A549 (cell line): ENCODE measurements at regions of chr17 and their contacts with region 1.

Region 1: DNA sequence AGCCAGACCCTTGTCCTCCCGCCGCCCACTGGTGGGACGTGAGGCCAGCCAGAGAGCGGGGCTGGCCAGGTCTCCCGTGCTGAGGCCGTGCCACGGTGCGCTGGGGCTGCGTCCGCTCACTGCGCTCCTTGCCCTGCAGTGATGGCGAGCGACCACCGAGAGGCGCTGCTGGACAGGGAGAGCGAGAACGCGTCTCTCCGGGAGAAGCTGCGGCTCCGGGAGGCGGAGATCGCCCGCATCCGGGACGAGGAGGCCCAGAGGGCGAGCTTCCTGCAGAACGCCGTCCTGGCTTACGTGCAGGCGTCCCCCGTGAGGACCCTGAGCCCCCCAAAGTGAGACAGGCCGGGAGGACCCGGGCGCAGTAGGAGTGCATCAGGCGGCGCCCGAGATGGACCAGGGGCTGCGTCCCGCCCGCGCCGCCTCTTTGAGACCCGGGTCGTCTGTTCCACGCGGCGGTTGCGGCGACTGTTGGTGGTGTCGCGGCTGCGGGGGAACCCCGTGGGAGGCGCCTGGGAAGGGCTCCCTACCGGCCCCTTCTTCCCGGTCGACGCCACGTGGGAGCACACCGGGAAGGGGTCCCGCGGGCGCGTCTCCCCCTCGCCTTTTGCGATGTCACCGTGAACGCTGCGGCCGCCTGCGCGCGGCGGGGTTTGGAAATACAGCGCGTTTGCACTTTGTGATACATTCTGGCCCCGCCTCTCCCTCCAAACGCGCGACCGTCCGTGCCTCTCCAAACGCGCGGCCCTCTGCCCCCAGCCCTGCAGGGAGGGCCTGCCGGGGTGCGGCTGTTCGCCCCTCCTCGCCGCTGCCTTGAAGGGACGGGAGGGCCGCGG is 792 bp upstream of the RAC3 start:
- DNase-seq: peak; percentile 92 to 93
- ATAC-seq: peak; percentile 62 to 88
- H3K4me3 ChIP-seq: peak overlapping the region; percentile 66
- H3K27ac ChIP-seq: peak overlapping the region; percentile 75 to 94
- H3K4me1 ChIP-seq: peaks cover 5% of the 10 kb centered on the region; the same call in 1 of the 3 replicates
- CTCF ChIP-seq: peak; percentile 54
- EP300 ChIP-seq: no peak
- POLR2A ChIP-seq: peak; percentile 31; the same call in 1 of the 2 replicates
- RAD21 ChIP-seq: peak; percentile 80 to 91

Region 2: DNA sequence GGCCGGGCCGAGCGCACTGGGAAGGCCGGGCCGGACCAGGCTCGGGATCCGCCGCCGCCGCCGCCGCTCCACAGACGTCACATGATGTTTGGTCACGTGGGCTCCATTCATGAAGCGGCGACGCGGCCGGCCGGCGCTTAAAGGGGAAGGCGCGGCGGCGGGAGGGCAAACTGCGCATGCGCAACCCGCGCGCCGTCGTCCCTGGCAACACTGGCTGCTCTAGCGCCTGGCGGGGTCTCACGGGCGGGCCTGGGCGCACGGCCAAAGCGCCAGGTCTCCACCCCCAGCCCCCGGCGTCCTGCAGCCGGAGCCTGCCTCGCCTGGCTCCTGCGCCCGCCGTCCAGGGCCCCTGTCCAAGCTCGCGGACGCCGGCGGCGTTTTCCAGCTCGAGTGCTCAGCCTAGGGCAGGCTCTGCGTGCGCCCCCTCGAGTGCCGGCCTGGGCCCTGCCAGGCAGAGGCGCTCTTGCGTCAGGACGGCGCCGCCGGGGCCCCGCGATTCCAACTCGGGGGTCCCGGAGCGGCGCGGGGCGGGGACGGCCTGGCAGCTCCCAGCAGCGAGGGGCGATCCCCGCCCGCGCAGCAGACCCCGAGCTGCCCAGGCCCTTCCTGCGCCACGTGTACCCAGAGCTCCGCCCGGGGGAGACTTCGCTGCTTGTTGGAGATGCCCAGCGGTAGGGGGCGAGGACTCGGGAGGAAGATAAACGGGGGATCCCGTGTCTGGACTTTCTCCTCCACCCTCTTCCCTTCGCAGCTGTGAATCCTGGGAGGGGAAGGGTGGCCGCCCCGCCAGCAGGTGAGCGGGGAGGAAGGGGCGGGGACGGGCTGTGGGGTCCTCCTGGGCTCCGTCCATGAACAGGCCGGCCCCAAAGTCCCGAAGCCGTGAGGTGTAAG is 102.8 kb before region 1 on chr17 and contains the start of gene MAFG:
- CTCF ChIA-PET with region 1: interaction called, 13 read pairs
- POLR2A ChIA-PET with region 1: interaction called, 3 read pairs
- DNase-seq: peak; percentile 96 to 98
- ATAC-seq: peak; percentile 20 to 40
- H3K4me3 ChIP-seq: peak within 1 kb of the TSS; percentile 90
- H3K27ac ChIP-seq: peak within 1 kb of the TSS; percentile 96 to 98
- H3K4me1 ChIP-seq: peaks cover 36% of the 10 kb centered on the region
- CTCF ChIP-seq: peak; percentile 74
- EP300 ChIP-seq: no peak
- POLR2A ChIP-seq: peak; percentile 33
- RAD21 ChIP-seq: peak in 1 of 2 experiments; percentile 54; a peak in 3 of 5 replicates
- polyA plus RNA-seq, gene MAFG: 41.6 and 47.9 TPM in 2 replicates

Region 3: DNA sequence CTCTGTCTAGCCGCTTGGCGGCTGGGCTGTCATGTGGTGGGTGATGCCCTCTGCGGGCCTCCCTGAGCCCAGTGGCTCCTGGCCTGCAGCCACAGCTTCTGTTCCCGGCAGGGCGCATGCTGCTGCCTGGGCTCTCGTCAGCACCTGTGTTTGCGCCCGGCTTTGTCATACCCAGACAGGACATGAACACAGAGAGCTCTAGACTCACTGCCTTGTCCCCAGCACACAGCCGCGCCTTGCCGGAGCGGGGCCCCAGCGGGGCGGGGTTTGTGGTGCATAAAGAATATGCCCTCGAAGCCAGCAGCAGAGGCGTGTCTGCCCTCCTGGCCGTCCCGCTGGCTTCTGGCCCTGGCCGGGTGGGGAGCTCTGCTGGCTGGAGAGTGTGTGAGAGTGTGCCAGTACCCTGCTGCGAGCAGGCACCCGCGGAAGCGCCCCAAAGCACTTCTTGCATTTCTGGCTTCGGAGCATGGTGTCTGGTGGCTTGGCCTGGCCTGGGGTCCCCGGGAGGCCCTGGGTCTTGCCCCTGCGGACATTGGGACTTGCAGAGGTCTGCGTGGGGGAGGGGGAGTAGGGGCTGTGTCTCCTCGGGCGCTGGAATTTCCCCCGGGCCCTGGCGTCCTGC is 38.9 kb before region 1 on chr17:
- CTCF ChIA-PET with region 1: interaction called, 15 read pairs
- POLR2A ChIA-PET with region 1: no interaction called
- DNase-seq: peak in 1 of 2 experiments; percentile 50
- ATAC-seq: peak; percentile 38 to 61
- H3K4me3 ChIP-seq: no peak overlapping the region
- H3K27ac ChIP-seq: peak overlapping the region in 1 of 2 experiments; percentile 61; a peak in 4 of 6 replicates
- H3K4me1 ChIP-seq: peaks cover 17% of the 10 kb centered on the region
- CTCF ChIP-seq: no peak
- EP300 ChIP-seq: no peak
- POLR2A ChIP-seq: no peak
- RAD21 ChIP-seq: no peak

Region 4: GRCh38 chr17:82077617-82078358 is 47.1 kb after region 1 on chr17:
- CTCF ChIA-PET with region 1: interaction called, 21 read pairs
- POLR2A ChIA-PET with region 1: no interaction called
- DNase-seq: no peak
- ATAC-seq: peak in 1 of 2 experiments; percentile 2; a peak in 3 of 6 replicates
- H3K4me3 ChIP-seq: no peak overlapping the region
- H3K27ac ChIP-seq: no peak overlapping the region
- H3K4me1 ChIP-seq: no peaks in the 10 kb centered on the region
- CTCF ChIP-seq: no peak
- EP300 ChIP-seq: no peak
- POLR2A ChIP-seq: no peak
- RAD21 ChIP-seq: no peak

Region 5: GRCh38 chr17:82105882-82106687 is 75.4 kb after region 1 on chr17:
- CTCF ChIA-PET with region 1: interaction called, 35 read pairs
- POLR2A ChIA-PET with region 1: no interaction called
- DNase-seq: peak; percentile 82 to 88
- ATAC-seq: peak; percentile 77 to 87
- H3K4me3 ChIP-seq: no peak overlapping the region
- H3K27ac ChIP-seq: peak overlapping the region; percentile 54 to 73
- H3K4me1 ChIP-seq: peaks cover 53% of the 10 kb centered on the region
- CTCF ChIP-seq: no peak
- EP300 ChIP-seq: no peak
- POLR2A ChIP-seq: peak; percentile 60
- RAD21 ChIP-seq: 0 out of 5 replicates have a peak, but pooled peaks of 1 of the 2 experiments have one; percentile 15

Region 6: GRCh38 chr17:82173351-82174041 is 142.8 kb after region 1 on chr17:
- CTCF ChIA-PET with region 1: interaction called, 13 read pairs
- POLR2A ChIA-PET with region 1: no interaction called
- DNase-seq: no peak
- ATAC-seq: peak in 1 of 2 experiments; percentile 28; a peak in 2 of 6 replicates
- H3K4me3 ChIP-seq: no peak overlapping the region
- H3K27ac ChIP-seq: no peak overlapping the region
- H3K4me1 ChIP-seq: no peaks in the 10 kb centered on the region
- CTCF ChIP-seq: no peak
- EP300 ChIP-seq: no peak
- POLR2A ChIP-seq: no peak
- RAD21 ChIP-seq: no peak